ENCODE measurements at regions of chr22 and their contacts with region 1.

Region 1: DNA sequence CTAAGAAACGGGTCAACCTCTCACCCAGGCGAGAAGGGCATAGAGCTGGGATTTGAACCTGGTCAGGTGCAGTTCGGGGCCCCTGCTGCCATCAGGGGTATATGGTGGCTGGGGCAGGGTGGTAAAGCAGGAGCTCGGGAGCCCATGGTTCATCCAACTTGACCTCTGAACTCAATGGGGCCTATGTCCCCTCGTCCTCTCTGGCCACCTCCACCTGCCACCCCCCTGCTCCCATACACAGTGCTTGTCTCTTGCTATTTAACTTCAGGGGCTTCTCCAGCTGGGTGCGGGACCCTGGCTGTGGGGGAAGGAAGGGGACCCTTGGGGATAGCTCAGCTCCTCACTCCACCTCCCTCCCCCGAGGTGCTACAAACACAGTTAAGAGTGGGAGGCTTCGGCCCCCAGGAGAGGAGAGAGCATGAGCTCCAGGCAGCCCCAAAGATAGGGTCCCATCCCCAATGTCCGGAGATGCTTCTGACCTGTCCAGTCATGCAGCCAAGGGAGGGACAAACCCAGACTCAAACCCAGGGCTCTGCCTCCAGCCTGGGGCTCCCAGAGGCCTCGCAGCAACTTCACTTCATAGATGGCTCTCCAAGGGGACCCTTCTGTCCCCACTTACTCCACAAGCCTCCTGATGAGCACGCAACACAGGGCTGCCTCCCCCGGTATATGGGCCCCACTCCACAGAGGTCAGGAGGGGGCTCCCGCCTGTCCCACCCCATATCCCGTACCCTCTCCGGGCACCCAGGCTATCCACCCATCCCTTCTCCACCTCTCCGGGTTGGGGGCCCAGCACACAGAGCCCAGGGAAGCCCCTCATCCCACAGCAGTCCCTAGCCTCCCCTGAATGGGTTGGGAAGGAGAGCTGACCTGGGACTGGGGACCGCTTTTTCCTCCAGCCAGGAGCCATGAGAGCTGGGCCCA is 712 bp downstream of the IL2RB start:
- DNase-seq: no peak
- H3K4me3 Mint-ChIP-seq: no peak overlapping the region
- H3K27ac Mint-ChIP-seq: no peak overlapping the region
- H3K4me1 Mint-ChIP-seq: peaks cover 12% of the 10 kb centered on the region
- H3K27me3 Mint-ChIP-seq: peaks cover 90% of the 10 kb centered on the region
- CTCF ChIP-seq: no peak

Region 2: GRCh38 chr22:37032546-37033460 is 116.2 kb before region 1 on chr22:
- CTCF ChIA-PET with region 1: no interaction called
- intact Hi-C with region 1: no loop called
- DNase-seq: peak; percentile 91
- H3K4me3 Mint-ChIP-seq: peak overlapping the region; percentile 63
- H3K27ac Mint-ChIP-seq: peak overlapping the region; percentile 100
- H3K4me1 Mint-ChIP-seq: peaks cover 52% of the 10 kb centered on the region
- H3K27me3 Mint-ChIP-seq: no peaks in the 10 kb centered on the region
- CTCF ChIP-seq: no peak

Region 3: GRCh38 chr22:37260901-37261336 is 111.9 kb after region 1 on chr22:
- CTCF ChIA-PET with region 1: no interaction called
- intact Hi-C with region 1: no loop called
- DNase-seq: peak; percentile 68
- H3K4me3 Mint-ChIP-seq: no peak overlapping the region
- H3K27ac Mint-ChIP-seq: no peak overlapping the region
- H3K4me1 Mint-ChIP-seq: peaks cover 30% of the 10 kb centered on the region
- H3K27me3 Mint-ChIP-seq: peaks cover 31% of the 10 kb centered on the region
- CTCF ChIP-seq: peak; percentile 79

Region 4: DNA sequence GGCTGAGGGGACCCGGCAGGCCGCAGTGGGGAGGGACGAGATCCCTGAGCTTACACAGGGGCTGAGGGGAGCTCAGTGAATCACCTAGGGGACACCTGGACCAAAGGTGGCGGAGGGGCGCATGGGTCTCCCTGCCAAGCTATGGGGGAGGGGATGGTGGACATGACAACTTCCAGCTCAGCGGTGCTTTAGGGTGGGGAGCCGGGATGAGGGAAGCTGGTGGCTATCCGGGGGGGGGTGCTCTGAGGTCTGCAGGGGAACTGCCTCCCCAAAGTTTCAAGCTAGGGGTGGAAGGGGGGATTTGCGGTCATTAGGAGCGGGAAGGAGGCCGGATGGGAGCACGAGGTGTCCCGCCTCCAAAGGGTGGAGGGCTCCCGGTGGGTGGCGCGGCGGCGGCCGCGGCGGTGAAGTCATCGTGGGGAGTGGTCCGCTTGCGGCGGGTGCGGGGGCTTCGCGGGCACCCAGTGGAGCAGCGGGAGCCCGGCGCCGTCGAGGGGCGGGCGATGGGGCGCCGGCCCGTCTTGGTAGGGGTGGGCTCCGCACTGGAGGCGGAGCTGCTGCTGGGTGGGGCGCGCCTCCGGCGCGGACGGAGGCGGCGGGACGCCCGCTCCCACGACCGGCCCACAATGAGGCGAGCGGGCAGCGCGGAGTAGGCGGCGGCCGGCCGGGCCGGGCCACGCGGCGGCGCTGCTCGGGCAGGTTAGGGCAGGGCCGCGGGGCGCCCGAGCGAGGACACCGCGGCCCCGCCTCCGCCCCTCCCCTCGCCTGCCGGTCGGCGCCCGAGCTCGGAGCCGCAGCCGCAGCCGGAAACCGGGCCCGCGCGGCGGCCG is 756.7 kb after region 1 on chr22 and contains the start of gene MICALL1:
- CTCF ChIA-PET with region 1: interaction called, 10 read pairs
- intact Hi-C with region 1: no loop called
- DNase-seq: peak; percentile 90
- H3K4me3 Mint-ChIP-seq: peak within 1 kb of the TSS; percentile 76
- H3K27ac Mint-ChIP-seq: peak within 1 kb of the TSS; percentile 89
- H3K4me1 Mint-ChIP-seq: peaks cover 30% of the 10 kb centered on the region
- H3K27me3 Mint-ChIP-seq: no peaks in the 10 kb centered on the region
- CTCF ChIP-seq: no peak
- total RNA-seq, gene MICALL1: 60.7 and 69.7 TPM in 2 replicates